ENCODE measurements at regions of chr6 and their contacts with region 1.

Region 1: DNA sequence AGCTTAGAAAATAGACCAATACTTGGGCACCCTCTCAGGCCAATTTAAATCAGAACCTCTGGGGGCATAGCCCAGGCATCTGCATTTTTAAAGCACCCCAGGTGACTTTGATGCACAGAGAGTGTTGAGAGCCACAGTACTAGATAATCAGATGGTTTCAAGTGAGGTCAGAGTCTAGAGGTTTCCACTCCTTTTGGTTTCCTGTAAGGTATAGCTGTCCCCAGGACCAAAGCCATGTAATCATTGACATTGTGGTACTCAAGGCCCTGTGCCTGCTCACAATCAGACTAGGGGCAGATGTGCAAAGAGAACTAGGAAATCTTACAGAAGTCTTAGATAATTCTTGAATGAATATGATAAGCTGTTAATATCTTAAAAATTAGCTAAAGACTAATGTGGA is 9.1 kb downstream of the FILIP1 start:
- DNase-seq: no peak
- ATAC-seq: no peak
- H3K4me3 ChIP-seq: no peak overlapping the region
- H3K27ac ChIP-seq: peak overlapping the region; percentile 74
- H3K4me1 ChIP-seq: peaks cover 93% of the 10 kb centered on the region
- H3K27me3 ChIP-seq: no peaks in the 10 kb centered on the region
- CTCF ChIP-seq: no peak

Region 2: GRCh38 chr6:75449716-75450115 is 34.8 kb before region 1 on chr6:
- intact Hi-C with region 1: loop called in 1 of 2 experiments (anchors 5 kb)
- DNase-seq: no peak
- ATAC-seq: peak in 1 of 4 donors; percentile 37
- H3K4me3 ChIP-seq: no peak overlapping the region
- H3K27ac ChIP-seq: no peak overlapping the region
- H3K4me1 ChIP-seq: peaks cover 9% of the 10 kb centered on the region
- H3K27me3 ChIP-seq: no peaks in the 10 kb centered on the region
- CTCF ChIP-seq: no peak

Measured in psoas muscle (tissue), 8 donors.